ENCODE measurements at regions of chr9 and their contacts with region 1.

Region 1: GRCh38 chr9:33081128-33081851 is 4.8 kb upstream of the SMU1 start:
- DNase-seq: peak in 1 of 3 donors; percentile 77
- ATAC-seq: peak; percentile 60
- H3K4me3 ChIP-seq: no peak overlapping the region
- H3K4me1 ChIP-seq: peaks cover 3% of the 10 kb centered on the region
- CTCF ChIP-seq: peak; percentile 49

Region 2: DNA sequence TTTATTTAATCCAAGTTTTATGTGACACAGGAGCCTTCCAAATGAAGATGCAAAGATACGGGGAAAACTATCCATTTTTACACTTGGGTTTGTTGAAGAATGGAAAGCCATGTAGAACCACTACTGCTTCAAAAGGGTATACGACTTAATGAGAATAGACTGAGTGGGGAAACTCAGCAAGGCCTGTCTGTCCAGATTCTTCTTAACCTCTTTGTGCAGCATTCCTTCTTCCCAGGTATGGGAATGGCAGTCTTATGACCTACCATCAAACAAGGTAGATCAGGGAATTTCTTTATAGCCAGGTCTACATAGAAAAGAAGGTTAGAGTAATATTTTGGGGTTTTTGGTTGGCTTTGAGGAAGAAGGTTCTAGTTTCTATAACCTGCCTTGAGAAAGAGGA is 103.2 kb before region 1 on chr9:
- intact Hi-C with region 1: no loop called
- DNase-seq: no peak
- ATAC-seq: no peak
- H3K4me3 ChIP-seq: no peak overlapping the region
- H3K4me1 ChIP-seq: no peaks in the 10 kb centered on the region
- CTCF ChIP-seq: no peak

Region 3: DNA sequence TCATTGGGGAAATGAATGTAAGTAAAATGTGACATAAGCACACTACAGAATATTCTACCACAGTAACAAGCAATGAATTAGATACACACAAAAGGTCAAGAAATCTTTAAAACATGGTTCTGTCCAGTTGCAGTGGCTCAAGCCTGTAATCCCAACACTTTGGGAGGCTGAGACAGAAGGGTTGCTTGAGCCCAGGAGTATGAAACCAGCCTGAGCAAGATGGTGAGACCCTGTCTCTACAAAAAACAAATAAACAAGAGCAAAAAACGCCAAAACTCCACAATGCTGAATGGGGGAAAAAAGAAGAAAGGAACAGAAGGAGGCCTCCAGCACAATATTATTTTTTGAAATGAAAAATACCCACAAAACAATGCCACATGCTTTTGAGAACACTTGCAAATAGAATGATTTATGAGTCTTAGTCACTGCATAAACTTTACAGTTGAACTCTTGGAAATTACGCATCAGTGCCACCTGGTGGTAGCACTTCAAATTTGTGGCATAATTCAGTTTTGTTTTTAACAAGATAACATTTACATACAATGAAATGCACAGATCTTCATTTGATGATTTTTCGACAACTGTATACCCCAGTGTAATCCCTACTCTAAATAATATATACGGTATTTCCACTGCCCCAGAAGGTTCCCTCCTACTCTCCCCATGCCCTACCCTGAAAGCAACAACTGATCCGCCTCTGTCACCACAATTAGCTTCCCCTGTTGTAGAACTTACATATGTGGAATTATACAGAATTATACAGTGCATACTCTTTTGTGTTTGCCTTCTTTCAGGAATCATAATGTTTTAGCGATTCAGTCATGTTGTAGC is 144.2 kb after region 1 on chr9:
- intact Hi-C with region 1: loop called (anchors 1 to 5 kb)
- DNase-seq: peak in 1 of 3 donors; percentile 91
- ATAC-seq: peak; percentile 42
- H3K4me3 ChIP-seq: no peak overlapping the region
- H3K4me1 ChIP-seq: peaks cover 22% of the 10 kb centered on the region
- CTCF ChIP-seq: peak; percentile 54

Region 4: GRCh38 chr9:33239921-33240320 is 158.6 kb after region 1 on chr9 and contains the start of gene SPINK4:
- intact Hi-C with region 1: no loop called
- DNase-seq: no peak
- ATAC-seq: peak; percentile 71
- H3K4me3 ChIP-seq: no peak within 1 kb of the TSS
- H3K4me1 ChIP-seq: peaks cover 9% of the 10 kb centered on the region
- CTCF ChIP-seq: no peak
- total RNA-seq, gene SPINK4: 13.2 to 85.2 (median 33.3) TPM

Region 5: GRCh38 chr9:33721674-33722358 is 640.5 kb after region 1 on chr9:
- intact Hi-C with region 1: no loop called
- DNase-seq: peak; percentile 84 to 93 (median 89)
- ATAC-seq: peak; percentile 99
- H3K4me3 ChIP-seq: no peak overlapping the region
- H3K4me1 ChIP-seq: no peaks in the 10 kb centered on the region
- CTCF ChIP-seq: peak; percentile 99

Measured in mucosa of descending colon (tissue), 3 donors.